ENCODE measurements at regions of chr1 and their contacts with region 1.

Region 1: DNA sequence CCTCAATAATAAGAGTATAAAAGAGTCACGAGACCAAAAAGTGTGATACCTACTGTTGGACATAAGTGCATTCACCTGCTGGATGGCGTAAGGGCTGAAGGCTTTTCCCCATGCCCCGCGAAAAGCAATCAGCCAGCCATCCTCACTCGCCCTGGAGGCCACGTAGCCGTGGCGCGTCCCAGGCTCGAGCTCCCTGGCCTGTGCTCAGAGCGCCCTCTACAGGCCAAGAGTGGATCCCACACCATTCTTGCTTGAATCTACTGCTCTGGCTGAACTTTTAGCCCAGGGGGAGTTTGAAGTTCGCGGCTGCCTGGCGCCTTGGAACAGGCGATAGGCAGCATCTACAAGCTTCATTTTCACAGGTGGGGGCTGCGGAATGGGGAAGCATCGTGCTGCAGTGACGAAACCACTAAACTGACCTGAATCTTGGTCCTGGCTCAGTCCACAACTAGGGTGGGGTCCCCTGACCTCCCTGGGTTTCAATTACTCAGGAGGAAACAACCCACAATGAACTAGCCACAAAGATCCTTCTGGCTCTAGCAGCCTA is 70.3 kb upstream of the SERBP1 start:
- DNase-seq: peak; percentile 95
- ATAC-seq: peak; percentile 99
- H3K4me3 Mint-ChIP-seq: no peak overlapping the region
- H3K27ac Mint-ChIP-seq: no peak overlapping the region
- H3K4me1 Mint-ChIP-seq: no peaks in the 10 kb centered on the region
- H3K27me3 Mint-ChIP-seq: peaks cover 57% of the 10 kb centered on the region
- CTCF ChIP-seq: peak; percentile 95

Region 2: GRCh38 chr1:67347688-67348472 is 152.6 kb before region 1 on chr1:
- CTCF ChIA-PET with region 1: interaction called, 89 read pairs
- POLR2A ChIA-PET with region 1: interaction called, 3 read pairs
- DNase-seq: peak; percentile 49
- ATAC-seq: peak; percentile 95
- H3K4me3 Mint-ChIP-seq: no peak overlapping the region
- H3K27ac Mint-ChIP-seq: no peak overlapping the region
- H3K4me1 Mint-ChIP-seq: peaks cover 26% of the 10 kb centered on the region
- H3K27me3 Mint-ChIP-seq: peaks cover 6% of the 10 kb centered on the region; the same call in 1 of the 2 replicates
- CTCF ChIP-seq: peak; percentile 33

Region 3: DNA sequence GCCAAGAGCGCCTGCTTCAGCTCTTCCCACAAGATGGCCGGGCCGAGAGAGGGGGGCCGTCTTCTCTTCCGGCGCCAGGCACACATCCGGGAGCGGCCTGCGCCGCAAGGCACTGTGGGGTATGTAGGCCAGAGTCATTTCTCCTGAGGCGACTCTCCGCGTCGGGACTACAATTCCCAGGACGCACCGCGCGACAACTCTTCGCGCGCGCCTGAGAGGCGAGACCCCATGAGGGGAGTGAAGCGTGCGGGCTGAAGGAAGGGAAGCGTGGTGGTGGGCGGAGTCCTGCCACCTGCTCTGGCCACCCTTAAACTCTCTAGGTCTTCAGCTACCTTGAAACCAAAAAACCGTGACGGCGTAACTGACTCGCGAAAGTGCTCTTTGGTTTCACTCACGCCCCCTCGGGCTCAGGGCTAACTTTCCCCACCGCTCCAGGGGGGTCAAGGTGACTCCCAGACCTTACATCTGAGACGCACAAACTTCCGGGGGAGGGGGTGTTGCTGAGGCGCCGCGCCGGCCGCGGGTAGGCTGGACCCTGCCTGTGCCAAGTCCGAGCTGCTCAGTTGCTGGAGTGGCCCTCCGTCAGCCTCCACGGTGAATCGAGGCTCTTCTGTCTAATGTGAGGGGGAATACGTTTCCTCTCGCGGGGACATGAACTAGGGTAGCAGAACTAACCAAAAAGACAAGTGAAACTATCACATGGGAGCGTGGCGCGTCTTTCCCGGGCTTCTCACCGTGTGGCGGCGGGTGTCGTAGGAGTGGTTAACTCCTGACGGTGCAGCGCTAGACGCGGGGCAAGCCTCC is 69.9 kb before region 1 on chr1 and contains the start of gene SERBP1:
- CTCF ChIA-PET with region 1: interaction called, 19 read pairs
- POLR2A ChIA-PET with region 1: no interaction called
- DNase-seq: peak; percentile 97
- ATAC-seq: peak; percentile 94
- H3K4me3 Mint-ChIP-seq: peak within 1 kb of the TSS; percentile 100
- H3K27ac Mint-ChIP-seq: peak within 1 kb of the TSS; percentile 99
- H3K4me1 Mint-ChIP-seq: peaks cover 41% of the 10 kb centered on the region
- H3K27me3 Mint-ChIP-seq: no peaks in the 10 kb centered on the region
- CTCF ChIP-seq: no peak
- total RNA-seq, gene SERBP1: 531 to 543 TPM (median 533 TPM) in 3 replicates

Region 4: GRCh38 chr1:67489643-67490042 is 10.8 kb before region 1 on chr1:
- CTCF ChIA-PET with region 1: interaction called, 11 read pairs
- POLR2A ChIA-PET with region 1: no interaction called
- DNase-seq: no peak
- ATAC-seq: peak; percentile 93
- H3K4me3 Mint-ChIP-seq: no peak overlapping the region
- H3K27ac Mint-ChIP-seq: no peak overlapping the region
- H3K4me1 Mint-ChIP-seq: peaks cover 13% of the 10 kb centered on the region
- H3K27me3 Mint-ChIP-seq: no peaks in the 10 kb centered on the region; the same call in 1 of the 2 replicates
- CTCF ChIP-seq: 0 out of 2 replicates have a peak, but pooled peaks have one; percentile 16

Region 5: GRCh38 chr1:67524143-67525052 is 23.9 kb after region 1 on chr1:
- CTCF ChIA-PET with region 1: interaction called, 21 read pairs
- POLR2A ChIA-PET with region 1: no interaction called
- DNase-seq: no peak
- ATAC-seq: peak; percentile 71
- H3K4me3 Mint-ChIP-seq: no peak overlapping the region
- H3K27ac Mint-ChIP-seq: no peak overlapping the region
- H3K4me1 Mint-ChIP-seq: no peaks in the 10 kb centered on the region
- H3K27me3 Mint-ChIP-seq: peaks cover 98% of the 10 kb centered on the region
- CTCF ChIP-seq: no peak

Region 6: DNA sequence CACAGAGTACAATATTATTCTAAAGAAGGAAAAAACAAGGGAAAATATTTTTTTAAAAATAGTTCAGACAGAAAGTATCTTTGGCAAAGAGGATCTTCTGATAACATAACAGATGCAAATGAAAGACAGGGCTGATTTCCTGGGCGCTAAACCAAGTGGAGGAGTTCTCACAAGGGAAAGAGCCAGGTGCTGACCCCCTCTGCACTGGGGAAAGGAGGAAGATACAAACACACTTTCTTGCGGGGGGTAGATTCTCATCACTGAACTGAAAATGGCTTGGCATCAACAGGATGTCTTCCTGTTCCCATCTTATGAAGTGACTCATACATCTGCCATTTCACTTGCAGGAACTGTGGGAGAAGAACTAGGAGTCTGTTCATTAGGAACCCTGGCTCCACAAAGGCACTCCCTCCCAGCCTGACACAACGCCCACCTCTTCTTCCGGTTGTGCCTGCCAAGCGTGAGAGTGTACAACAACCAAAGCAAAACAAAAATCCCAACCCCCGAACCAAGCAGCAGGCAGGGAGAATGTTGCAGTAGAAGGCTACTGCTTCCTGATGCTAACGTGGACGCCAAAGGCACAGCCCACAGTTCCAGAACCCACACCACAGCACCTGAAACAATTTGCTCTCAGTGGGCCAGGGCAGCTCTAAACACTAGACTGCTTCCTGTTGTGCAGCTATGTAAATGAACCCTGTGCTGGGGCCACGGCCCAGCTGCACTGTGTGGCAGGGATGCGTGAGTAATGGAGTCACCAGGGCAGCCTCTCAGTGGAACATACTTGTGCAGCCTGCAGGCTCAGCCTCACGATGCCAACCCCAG is 235.5 kb after region 1 on chr1:
- CTCF ChIA-PET with region 1: no interaction called
- POLR2A ChIA-PET with region 1: no interaction called
- DNase-seq: no peak
- ATAC-seq: peak; percentile 76
- H3K4me3 Mint-ChIP-seq: no peak overlapping the region
- H3K27ac Mint-ChIP-seq: peak overlapping the region; percentile 39
- H3K4me1 Mint-ChIP-seq: peaks cover 28% of the 10 kb centered on the region
- H3K27me3 Mint-ChIP-seq: no peaks in the 10 kb centered on the region
- CTCF ChIP-seq: no peak

Measured in WTC11 (cell line).